ENCODE measurements at regions of chrX and their contacts with region 1.

Region 1: DNA sequence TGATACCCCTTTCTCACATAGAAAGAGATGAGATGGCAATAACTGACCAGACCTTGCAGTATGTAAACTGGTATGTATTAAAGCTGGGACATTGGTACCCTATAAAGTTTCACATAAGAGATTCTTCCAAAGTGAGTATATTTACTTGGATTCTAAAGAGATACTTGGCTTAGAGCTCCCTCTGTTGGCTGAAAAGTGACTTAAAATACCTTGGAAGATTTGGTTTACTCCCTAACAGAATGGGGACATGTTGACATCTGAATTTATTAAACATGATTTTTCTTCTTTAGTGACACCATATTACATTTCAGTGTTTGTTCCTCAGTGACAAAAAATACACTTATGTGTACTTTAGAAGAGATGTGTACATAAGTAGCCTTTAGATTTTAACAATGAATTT is 47.9 kb upstream of the RGN start:
- DNase-seq: peak; percentile 19
- H3K4me3 ChIP-seq: no peak overlapping the region
- CTCF ChIP-seq: peak; percentile 27

Region 2: DNA sequence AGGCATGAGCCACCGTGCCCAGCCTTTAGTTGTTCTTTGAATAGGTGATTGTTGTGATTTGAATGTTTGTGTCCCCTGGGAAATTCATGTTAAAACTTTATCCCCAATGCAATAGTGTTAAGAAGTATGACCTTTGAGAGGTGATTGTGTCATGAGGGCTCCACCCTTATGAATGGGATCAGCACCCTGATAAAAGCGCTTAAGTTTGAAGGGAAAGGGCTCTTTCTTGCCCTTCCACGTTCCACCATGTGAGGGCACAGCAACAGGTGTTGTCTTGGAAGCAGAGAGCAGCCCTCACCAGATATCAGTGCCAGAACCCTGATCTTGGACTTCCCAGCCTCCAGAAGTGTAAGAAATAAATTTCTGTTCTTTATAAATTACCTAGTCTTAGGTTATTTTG is 227.2 kb before region 1 on chrX:
- CTCF ChIA-PET with region 1: interaction called, 16 read pairs
- POLR2A ChIA-PET with region 1: no interaction called
- DNase-seq: no peak
- H3K4me3 ChIP-seq: no peak overlapping the region
- CTCF ChIP-seq: peak; percentile 17

Region 3: GRCh38 chrX:47321386-47321785 is 291.0 kb after region 1 on chrX:
- CTCF ChIA-PET with region 1: no interaction called
- POLR2A ChIA-PET with region 1: no interaction called
- DNase-seq: no peak
- H3K4me3 ChIP-seq: no peak overlapping the region
- CTCF ChIP-seq: no peak

Measured in AG04449 (cell line).